ENCODE measurements at regions of chr19 and their contacts with region 1.

Region 1: DNA sequence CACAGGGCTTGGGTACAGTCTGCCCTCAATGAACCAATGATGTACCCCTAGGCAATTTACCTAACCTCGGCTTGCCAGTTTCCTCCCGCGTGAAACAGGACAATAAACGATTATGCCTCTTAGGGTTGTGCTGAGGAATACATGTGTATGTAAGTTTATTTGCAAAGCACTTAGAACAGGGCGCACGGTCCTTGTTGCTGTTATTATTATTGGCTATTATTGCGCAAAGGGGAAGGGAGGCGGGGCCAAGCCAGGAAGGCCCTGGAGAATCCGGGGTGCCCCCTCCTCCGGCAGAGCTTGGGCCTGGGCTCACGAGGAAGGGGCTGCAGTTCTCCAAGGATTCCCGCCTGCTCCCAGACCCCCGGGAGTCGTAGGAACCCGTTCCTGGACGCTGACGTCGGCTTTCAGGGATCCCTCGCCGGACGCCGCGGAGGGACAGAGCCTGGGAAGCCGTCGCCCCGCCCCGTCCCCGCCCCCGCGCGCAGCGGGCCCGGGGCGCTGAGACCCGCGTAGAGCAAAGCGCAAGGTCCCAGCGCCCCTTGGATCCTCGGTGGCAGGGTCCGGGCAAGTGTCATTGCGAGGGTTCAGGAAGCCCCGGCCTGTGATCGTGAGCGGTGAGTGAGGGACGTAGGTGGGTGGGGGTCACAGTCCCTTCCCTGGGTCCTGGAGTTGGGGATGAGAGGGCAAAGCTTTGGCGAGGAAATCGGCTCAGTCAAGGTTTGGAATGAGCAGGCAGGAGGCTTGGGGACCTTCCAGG is at the start of gene TMEM91:
- DNase-seq: no peak
- ATAC-seq: peak; percentile 54 to 60
- H3K4me3 ChIP-seq: peak within 1 kb of the TSS; percentile 44
- H3K27ac ChIP-seq: peak within 1 kb of the TSS; percentile 45 to 74; a peak in 5 of 6 replicates
- H3K4me1 ChIP-seq: peaks cover 18% of the 10 kb centered on the region
- CTCF ChIP-seq: no peak
- EP300 ChIP-seq: no peak
- POLR2A ChIP-seq: peak; percentile 26; the same call in 1 of the 2 replicates
- RAD21 ChIP-seq: no peak
- polyA plus RNA-seq, gene TMEM91: 5.2 and 6.8 TPM in 2 replicates

Region 2: DNA sequence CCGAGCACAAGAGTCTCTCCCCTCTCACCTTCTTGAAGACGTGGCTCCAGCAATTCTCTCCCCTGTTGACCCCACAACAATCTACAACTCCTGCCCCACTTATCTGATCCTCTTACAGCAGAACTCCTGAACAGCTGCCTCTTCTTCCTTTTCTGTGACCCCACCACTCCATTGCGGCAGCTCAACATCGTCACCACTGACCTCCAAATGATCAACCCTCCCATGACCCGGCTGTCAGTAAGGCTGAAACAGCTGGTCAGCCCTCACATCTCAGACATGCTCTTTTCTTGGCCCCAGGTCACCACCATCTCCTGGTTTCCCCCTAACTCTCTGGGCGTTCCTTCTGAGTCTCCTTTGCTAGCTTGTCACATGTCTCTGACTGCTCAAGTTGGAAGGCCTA is 18.9 kb after region 1 on chr19:
- CTCF ChIA-PET with region 1: interaction called, 10 read pairs
- POLR2A ChIA-PET with region 1: no interaction called
- DNase-seq: no peak
- ATAC-seq: no peak
- H3K4me3 ChIP-seq: no peak overlapping the region
- H3K27ac ChIP-seq: no peak overlapping the region
- H3K4me1 ChIP-seq: peaks cover 20% of the 10 kb centered on the region
- CTCF ChIP-seq: no peak
- EP300 ChIP-seq: no peak
- POLR2A ChIP-seq: no peak
- RAD21 ChIP-seq: no peak